ENCODE measurements at regions of chr6 and their contacts with region 1.

Region 1: GRCh38 chr6:2353412-2354137 is 108.2 kb upstream of the GMDS start:
- DNase-seq: peak; percentile 23 to 69
- ATAC-seq: peak; percentile 59 to 81 (median 78)
- H3K4me3 ChIP-seq: no peak overlapping the region
- H3K27ac ChIP-seq: no peak overlapping the region
- H3K4me1 ChIP-seq: peaks cover 0 to 12% (median 0%) of the 10 kb centered on the region in 9 donors
- H3K27me3 ChIP-seq: no peaks in the 10 kb centered on the region
- CTCF ChIP-seq: peak; percentile 63 to 88 (median 81)

Region 2: DNA sequence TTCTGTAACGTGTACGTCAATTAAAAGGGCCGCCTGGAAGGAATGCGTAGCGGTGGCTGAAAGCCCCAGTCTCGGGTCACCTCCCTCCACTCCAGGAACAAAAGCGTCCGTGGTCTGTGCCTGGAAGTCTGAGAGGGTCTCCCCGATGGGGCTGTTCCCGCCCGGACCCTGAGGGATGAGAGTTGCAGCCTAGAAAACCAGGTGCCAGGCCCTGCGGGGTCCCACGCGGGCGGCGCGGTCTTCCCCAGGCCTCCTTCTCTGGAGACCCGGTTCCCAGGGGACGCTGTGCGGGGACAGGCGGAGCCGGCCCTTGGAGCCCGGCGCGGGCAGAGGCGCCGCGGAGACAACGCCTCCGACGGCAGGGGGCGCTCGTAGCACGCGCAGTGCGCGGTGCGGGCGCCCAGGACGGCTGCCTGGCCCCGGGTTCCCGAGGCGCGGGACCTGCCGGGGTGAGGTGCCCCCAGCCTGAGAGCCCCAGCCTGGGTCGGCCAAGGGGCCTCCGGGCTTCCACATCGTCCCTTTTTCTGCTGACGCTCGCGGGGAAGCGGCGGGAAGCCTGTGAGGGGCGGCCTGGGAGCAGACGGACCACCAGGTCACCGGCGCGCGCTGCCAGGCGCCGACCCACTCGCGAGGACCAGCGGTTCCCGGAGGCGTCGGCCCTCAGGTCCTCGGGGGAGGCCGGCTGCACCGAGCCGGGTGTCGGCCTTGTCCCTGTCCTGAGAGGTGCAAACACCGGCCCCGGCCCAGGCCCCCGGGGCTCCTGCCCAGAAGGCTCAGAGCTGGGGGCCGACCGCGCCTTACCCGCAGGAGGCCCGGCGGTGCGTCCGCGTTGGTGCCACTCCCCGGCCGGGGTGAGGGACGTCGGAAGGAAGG is 749.2 kb before region 1 on chr6:
- intact Hi-C with region 1: loop called (anchors 1 to 5 kb)
- DNase-seq: peak in 1 of 2 donors; percentile 80
- ATAC-seq: peak; percentile 90 to 94 (median 92)
- H3K4me3 ChIP-seq: peak overlapping the region; percentile 0 to 66 (median 58)
- H3K27ac ChIP-seq: no peak overlapping the region
- H3K4me1 ChIP-seq: peaks cover 3 to 46% (median 22%) of the 10 kb centered on the region in 9 donors
- H3K27me3 ChIP-seq: peaks cover 16 to 99% (median 79%) of the 10 kb centered on the region in 7 donors
- CTCF ChIP-seq: peak; percentile 89 to 99 (median 98)

Region 3: GRCh38 chr6:2111162-2111677 is 242.4 kb before region 1 on chr6:
- intact Hi-C with region 1: loop called in 4 of 10 experiments (anchors 10 kb)
- DNase-seq: no peak
- ATAC-seq: peak in 6 of 8 donors; percentile 47 to 77 (median 72)
- H3K4me3 ChIP-seq: peak overlapping the region in 3 of 10 donors; percentile 10 to 18 (median 13)
- H3K27ac ChIP-seq: peak overlapping the region in 6 of 10 donors; percentile 5 to 79 (median 46)
- H3K4me1 ChIP-seq: peaks cover 0 to 20% (median 8%) of the 10 kb centered on the region in 9 donors
- H3K27me3 ChIP-seq: no peaks in the 10 kb centered on the region
- CTCF ChIP-seq: no peak

Region 4: DNA sequence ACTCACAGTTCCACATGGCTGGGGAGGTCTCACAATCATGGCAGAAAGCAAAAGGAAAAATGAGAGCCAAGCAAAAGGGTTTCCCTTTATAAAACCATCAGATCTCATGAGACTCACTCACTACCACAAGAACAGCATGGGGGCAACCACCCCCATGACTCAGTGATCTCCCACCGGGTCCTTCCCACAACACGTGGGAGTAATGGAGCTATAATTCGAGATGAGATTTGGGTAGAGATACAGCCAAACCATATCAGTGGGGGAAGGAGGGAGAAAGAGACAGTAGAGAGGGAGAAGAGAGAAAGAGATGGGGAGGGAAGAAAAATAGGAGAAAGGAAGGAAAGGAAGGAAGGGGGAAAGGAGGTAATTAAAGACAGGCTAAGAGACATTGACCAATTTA is 138.2 kb before region 1 on chr6:
- intact Hi-C with region 1: loop called in 1 of 10 experiments (anchors 10 kb)
- DNase-seq: no peak
- ATAC-seq: no peak
- H3K4me3 ChIP-seq: no peak overlapping the region
- H3K27ac ChIP-seq: no peak overlapping the region
- H3K4me1 ChIP-seq: peaks cover 0 to 11% (median 0%) of the 10 kb centered on the region in 9 donors
- H3K27me3 ChIP-seq: no peaks in the 10 kb centered on the region
- CTCF ChIP-seq: no peak

Region 5: GRCh38 chr6:3176562-3177355 is 823.2 kb after region 1 on chr6:
- intact Hi-C with region 1: no loop called
- DNase-seq: no peak
- ATAC-seq: peak in 6 of 8 donors; percentile 46 to 87 (median 63)
- H3K4me3 ChIP-seq: no peak overlapping the region
- H3K27ac ChIP-seq: no peak overlapping the region
- H3K4me1 ChIP-seq: no peaks in the 10 kb centered on the region
- H3K27me3 ChIP-seq: peaks cover 0 to 4% (median 0%) of the 10 kb centered on the region in 7 donors
- CTCF ChIP-seq: no peak

Measured in heart right ventricle (tissue), 16 donors.